ENCODE measurements at regions of chr9 and their contacts with region 1.

Region 1: DNA sequence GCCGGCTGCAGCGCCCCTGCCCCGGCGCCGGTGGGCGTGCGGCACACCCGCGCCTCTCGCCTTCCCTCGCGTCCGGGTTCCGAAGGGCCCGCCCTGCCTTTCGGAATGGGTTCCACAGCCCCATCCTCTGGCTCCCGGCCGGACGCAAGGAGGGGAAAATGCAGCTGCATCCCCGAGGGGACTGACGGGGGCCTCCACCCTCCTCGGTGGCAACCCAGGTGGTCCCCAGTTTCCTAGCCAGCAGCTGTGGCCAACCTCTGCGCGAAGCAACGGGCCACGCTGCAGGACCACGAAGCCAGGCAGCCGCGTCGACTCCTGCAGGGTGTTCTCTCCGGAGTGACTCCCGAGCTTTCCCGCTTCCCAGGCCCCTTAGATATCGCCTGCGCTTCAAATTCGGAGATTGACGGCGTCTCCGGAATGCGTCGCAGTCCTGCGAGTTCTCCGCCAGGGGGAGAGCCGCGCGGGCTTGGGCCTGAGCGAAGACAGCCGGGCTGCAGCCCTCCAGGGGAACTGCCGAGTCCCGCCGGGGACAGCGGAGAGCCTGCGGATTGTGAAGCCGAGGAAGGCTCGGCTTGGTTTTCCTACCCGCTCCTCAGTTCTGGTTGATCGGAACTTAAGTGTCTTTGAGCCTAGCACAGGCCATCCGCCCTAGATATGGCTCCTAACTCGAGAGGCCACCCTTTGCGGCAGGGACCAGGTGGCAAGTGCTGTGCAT is 582 bp upstream of the APBA1 start:
- DNase-seq: peak; percentile 84
- H3K4me3 Mint-ChIP-seq: peak overlapping the region; percentile 70
- H3K27ac Mint-ChIP-seq: no peak overlapping the region
- H3K4me1 Mint-ChIP-seq: peaks cover 6% of the 10 kb centered on the region
- H3K27me3 Mint-ChIP-seq: peaks cover 15% of the 10 kb centered on the region
- CTCF ChIP-seq: peak; percentile 82

Region 2: GRCh38 chr9:69657269-69657668 is 15.5 kb before region 1 on chr9:
- CTCF ChIA-PET with region 1: interaction called, 12 read pairs
- POLR2A ChIA-PET with region 1: no interaction called
- intact Hi-C with region 1: no loop called
- DNase-seq: no peak
- H3K4me3 Mint-ChIP-seq: no peak overlapping the region
- H3K27ac Mint-ChIP-seq: no peak overlapping the region
- H3K4me1 Mint-ChIP-seq: no peaks in the 10 kb centered on the region
- H3K27me3 Mint-ChIP-seq: peaks cover 45% of the 10 kb centered on the region
- CTCF ChIP-seq: no peak

Region 3: GRCh38 chr9:69759421-69760277 is 86.9 kb after region 1 on chr9 and contains the start of gene PTAR1:
- CTCF ChIA-PET with region 1: interaction called, 5 read pairs
- POLR2A ChIA-PET with region 1: interaction called, 7 read pairs
- intact Hi-C with region 1: loop called (anchors 2 kb)
- DNase-seq: peak; percentile 89
- H3K4me3 Mint-ChIP-seq: peak within 1 kb of the TSS; percentile 89
- H3K27ac Mint-ChIP-seq: peak within 1 kb of the TSS; percentile 73
- H3K4me1 Mint-ChIP-seq: peaks cover 6% of the 10 kb centered on the region
- H3K27me3 Mint-ChIP-seq: no peaks in the 10 kb centered on the region
- CTCF ChIP-seq: no peak
- total RNA-seq, gene PTAR1: 41.4 and 43.5 TPM in 2 replicates

Region 4: GRCh38 chr9:69771775-69772418 is 99.1 kb after region 1 on chr9:
- CTCF ChIA-PET with region 1: no interaction called
- POLR2A ChIA-PET with region 1: no interaction called
- intact Hi-C with region 1: no loop called
- DNase-seq: peak; percentile 24
- H3K4me3 Mint-ChIP-seq: no peak overlapping the region
- H3K27ac Mint-ChIP-seq: no peak overlapping the region
- H3K4me1 Mint-ChIP-seq: no peaks in the 10 kb centered on the region
- H3K27me3 Mint-ChIP-seq: no peaks in the 10 kb centered on the region
- CTCF ChIP-seq: no peak

Region 5: GRCh38 chr9:69877854-69878514 is 205.2 kb after region 1 on chr9:
- CTCF ChIA-PET with region 1: interaction called, 5 read pairs
- POLR2A ChIA-PET with region 1: no interaction called
- intact Hi-C with region 1: loop called (anchors 1 kb)
- DNase-seq: peak; percentile 63
- H3K4me3 Mint-ChIP-seq: no peak overlapping the region
- H3K27ac Mint-ChIP-seq: no peak overlapping the region
- H3K4me1 Mint-ChIP-seq: peaks cover 8% of the 10 kb centered on the region
- H3K27me3 Mint-ChIP-seq: no peaks in the 10 kb centered on the region
- CTCF ChIP-seq: peak; percentile 58

Region 6: DNA sequence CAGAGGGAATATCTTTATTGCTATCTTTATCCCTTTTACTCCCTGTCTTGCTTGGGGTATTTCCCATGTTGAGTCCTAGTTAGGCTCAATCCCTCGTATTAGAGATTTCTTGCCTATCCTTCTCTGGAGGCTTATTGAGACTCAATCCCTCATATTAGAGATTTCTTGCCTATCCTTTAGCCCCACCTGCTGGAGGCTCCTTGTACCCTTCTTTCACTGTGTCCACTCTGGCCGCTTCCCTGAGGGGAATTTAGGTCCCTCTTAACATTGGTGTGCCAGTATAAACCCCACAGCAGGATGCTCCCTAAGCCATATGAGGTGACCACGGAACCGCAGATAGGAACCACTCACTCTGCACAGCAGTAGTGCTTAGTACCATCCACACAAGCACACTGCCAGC is 260.1 kb after region 1 on chr9:
- CTCF ChIA-PET with region 1: interaction called, 5 read pairs
- POLR2A ChIA-PET with region 1: no interaction called
- intact Hi-C with region 1: loop called (anchors 2 kb)
- DNase-seq: peak; percentile 62
- H3K4me3 Mint-ChIP-seq: no peak overlapping the region
- H3K27ac Mint-ChIP-seq: no peak overlapping the region
- H3K4me1 Mint-ChIP-seq: peaks cover 8% of the 10 kb centered on the region
- H3K27me3 Mint-ChIP-seq: peaks cover 1% of the 10 kb centered on the region
- CTCF ChIP-seq: peak; percentile 31

Measured in MCF 10A (cell line).